ENCODE measurements at regions of chr1 and their contacts with region 1.

Region 1: DNA sequence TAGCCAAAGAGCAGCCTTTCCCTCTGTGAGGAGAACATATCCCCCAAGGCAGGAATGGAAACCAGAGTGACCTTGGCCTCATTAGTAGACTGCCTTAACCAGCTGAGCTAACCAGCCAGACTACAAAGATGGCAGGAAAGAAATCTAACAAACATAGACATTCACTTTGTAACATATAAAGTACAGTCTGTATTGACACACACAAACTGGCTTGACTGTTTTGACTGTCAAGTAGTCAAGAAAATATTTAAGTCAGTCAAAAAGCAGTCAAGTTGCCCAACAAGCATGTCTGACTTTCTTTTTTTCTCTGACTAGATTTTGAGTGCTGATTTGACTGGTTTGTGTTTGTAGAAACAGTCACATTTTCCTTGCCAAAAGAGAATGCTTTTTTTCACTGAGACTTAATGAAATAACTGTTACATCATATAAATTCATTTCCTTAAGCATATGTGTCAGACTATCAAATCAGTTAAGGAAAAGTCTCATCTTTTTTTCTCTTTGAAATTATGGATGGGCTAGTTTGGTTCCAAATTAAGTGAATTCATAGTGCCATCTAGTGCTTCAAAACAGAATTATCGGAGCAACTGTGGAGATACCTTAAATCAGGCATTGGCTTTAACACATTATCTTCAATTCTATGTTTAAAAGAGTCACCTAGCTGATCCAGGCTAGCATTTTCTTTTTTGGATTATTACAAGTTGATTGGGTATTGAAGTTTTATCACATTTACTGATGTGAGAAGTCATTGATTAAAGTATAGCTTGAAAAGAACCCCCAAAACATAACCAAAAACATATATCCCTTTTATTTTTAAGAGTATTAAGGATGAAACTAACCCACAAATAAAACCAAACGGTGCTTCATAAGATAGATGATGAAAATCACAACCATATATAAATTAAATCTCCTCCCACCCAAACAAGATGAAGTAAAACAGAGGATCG is 75.0 kb downstream of the ATP6V1G3 start:
- DNase-seq: no peak
- H3K4me3 Mint-ChIP-seq: no peak overlapping the region
- H3K27ac Mint-ChIP-seq: no peak overlapping the region
- H3K4me1 Mint-ChIP-seq: peaks cover 12% of the 10 kb centered on the region
- H3K27me3 Mint-ChIP-seq: no peaks in the 10 kb centered on the region

Region 2: DNA sequence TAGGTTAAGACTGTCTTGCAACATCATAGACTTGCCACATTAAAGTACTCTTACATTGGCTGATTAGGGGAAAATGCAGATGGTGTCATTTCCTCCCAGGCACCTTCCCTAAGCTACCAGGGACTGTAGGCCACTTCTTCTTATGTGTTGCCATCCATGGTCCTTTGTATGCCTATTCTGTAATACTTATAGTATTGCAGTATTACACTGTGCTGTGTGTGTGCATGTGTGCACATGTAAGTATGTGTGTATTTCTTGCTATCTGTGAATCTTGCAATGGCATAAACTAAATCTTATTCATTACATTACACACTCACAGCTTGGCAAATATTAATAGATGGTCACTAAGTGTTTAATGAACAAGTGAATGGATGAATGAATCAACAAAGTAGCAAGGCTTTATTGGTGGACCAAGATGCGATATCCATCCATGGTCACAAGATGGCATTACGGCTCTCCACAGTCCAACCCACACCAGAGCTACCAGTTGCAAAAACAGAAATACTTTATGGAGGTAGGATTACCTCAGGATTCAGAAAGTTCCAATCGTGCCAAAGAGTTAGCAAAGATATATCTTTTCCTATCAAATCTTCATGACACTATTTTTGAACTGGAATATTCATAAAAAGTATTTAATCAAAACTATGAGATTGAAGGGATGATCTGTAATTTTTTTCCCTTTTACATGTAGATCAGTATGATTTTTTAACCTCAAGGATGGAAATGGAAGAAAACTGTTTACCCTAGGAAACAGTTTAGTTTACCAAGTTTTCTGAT is 850.4 kb before region 1 on chr1:
- CTCF ChIA-PET with region 1: interaction called, 4 read pairs
- POLR2A ChIA-PET with region 1: no interaction called
- intact Hi-C with region 1: loop called (anchors 2 kb)
- DNase-seq: peak; percentile 38
- H3K4me3 Mint-ChIP-seq: no peak overlapping the region
- H3K27ac Mint-ChIP-seq: no peak overlapping the region
- H3K4me1 Mint-ChIP-seq: peaks cover 1% of the 10 kb centered on the region
- H3K27me3 Mint-ChIP-seq: no peaks in the 10 kb centered on the region

Region 3: GRCh38 chr1:197915862-197916499 is 549.5 kb before region 1 on chr1:
- CTCF ChIA-PET with region 1: no interaction called
- POLR2A ChIA-PET with region 1: no interaction called
- intact Hi-C with region 1: loop called (anchors 5 kb)
- DNase-seq: no peak
- H3K4me3 Mint-ChIP-seq: peak overlapping the region; percentile 49
- H3K27ac Mint-ChIP-seq: no peak overlapping the region
- H3K4me1 Mint-ChIP-seq: peaks cover 77% of the 10 kb centered on the region
- H3K27me3 Mint-ChIP-seq: peaks cover 92% of the 10 kb centered on the region

Region 4: GRCh38 chr1:198088360-198089071 is 377.0 kb before region 1 on chr1:
- CTCF ChIA-PET with region 1: interaction called, 9 read pairs
- POLR2A ChIA-PET with region 1: no interaction called
- intact Hi-C with region 1: loop called (anchors 1 kb)
- DNase-seq: no peak
- H3K4me3 Mint-ChIP-seq: no peak overlapping the region
- H3K27ac Mint-ChIP-seq: no peak overlapping the region
- H3K4me1 Mint-ChIP-seq: peaks cover 7% of the 10 kb centered on the region
- H3K27me3 Mint-ChIP-seq: peaks cover 2% of the 10 kb centered on the region

Region 5: GRCh38 chr1:198201956-198202784 is 263.3 kb before region 1 on chr1:
- CTCF ChIA-PET with region 1: no interaction called
- POLR2A ChIA-PET with region 1: no interaction called
- intact Hi-C with region 1: loop called (anchors 5 kb)
- DNase-seq: peak; percentile 75
- H3K4me3 Mint-ChIP-seq: peak overlapping the region; percentile 40
- H3K27ac Mint-ChIP-seq: peak overlapping the region; percentile 75
- H3K4me1 Mint-ChIP-seq: peaks cover 75% of the 10 kb centered on the region
- H3K27me3 Mint-ChIP-seq: no peaks in the 10 kb centered on the region

Region 6: DNA sequence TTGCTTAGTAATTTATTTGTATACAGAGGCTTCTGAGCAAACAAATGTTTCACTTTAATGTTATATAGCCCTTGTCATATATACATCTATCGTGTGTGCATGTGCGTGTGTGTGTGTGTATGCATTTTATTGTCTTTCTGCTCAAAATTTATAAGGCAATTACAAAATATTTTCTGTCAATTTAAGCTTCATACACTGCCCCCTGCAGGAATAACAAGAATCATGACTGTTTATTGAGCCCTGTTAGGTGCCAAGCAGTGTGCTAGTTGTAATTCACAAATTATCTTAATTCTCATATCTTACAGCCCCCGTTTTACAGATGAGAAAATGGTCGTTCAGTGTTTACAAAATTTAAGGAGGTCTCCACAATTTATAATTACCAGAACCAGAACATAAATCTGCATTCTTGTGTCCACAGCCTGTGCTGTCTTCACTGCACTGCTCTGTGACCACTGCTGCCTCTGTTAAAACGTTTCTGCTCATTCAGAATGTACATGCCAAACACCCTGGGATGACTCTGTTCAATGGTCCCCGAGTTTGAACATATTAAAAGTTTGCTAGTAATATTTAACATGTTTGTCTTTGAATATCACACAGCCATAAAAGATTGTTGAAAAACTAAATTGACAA is 106.3 kb before region 1 on chr1:
- CTCF ChIA-PET with region 1: interaction called, 3 read pairs
- POLR2A ChIA-PET with region 1: no interaction called
- intact Hi-C with region 1: loop called (anchors 2 kb)
- DNase-seq: no peak
- H3K4me3 Mint-ChIP-seq: no peak overlapping the region
- H3K27ac Mint-ChIP-seq: no peak overlapping the region
- H3K4me1 Mint-ChIP-seq: peaks cover 8% of the 10 kb centered on the region
- H3K27me3 Mint-ChIP-seq: no peaks in the 10 kb centered on the region

Region 7: DNA sequence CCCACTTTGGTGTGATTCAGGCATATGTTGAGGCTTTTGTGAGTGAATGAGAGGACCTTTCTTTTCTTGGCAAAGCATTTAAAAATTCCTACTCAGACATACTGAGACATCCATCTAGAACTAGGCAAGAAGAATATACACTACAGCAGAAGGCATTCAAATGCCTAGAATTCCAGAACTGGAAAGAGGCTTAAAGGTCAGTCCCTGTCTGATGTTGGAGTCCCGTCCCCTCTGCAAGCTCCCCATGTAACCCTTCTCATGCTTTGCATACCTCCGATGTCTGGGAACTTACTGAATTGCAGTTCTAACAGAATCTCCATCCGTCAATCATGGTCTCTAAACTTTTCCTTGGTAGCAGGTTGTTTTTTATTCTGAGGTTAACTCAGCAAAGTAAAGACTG is 77.9 kb before region 1 on chr1:
- CTCF ChIA-PET with region 1: no interaction called
- POLR2A ChIA-PET with region 1: no interaction called
- intact Hi-C with region 1: no loop called
- DNase-seq: no peak
- H3K4me3 Mint-ChIP-seq: no peak overlapping the region
- H3K27ac Mint-ChIP-seq: no peak overlapping the region
- H3K4me1 Mint-ChIP-seq: no peaks in the 10 kb centered on the region
- H3K27me3 Mint-ChIP-seq: peaks cover 3% of the 10 kb centered on the region